Head of caudate nucleus (tissue), 42 donors: ENCODE measurements at regions of chr5 and their contacts with region 1.

Region 1: DNA sequence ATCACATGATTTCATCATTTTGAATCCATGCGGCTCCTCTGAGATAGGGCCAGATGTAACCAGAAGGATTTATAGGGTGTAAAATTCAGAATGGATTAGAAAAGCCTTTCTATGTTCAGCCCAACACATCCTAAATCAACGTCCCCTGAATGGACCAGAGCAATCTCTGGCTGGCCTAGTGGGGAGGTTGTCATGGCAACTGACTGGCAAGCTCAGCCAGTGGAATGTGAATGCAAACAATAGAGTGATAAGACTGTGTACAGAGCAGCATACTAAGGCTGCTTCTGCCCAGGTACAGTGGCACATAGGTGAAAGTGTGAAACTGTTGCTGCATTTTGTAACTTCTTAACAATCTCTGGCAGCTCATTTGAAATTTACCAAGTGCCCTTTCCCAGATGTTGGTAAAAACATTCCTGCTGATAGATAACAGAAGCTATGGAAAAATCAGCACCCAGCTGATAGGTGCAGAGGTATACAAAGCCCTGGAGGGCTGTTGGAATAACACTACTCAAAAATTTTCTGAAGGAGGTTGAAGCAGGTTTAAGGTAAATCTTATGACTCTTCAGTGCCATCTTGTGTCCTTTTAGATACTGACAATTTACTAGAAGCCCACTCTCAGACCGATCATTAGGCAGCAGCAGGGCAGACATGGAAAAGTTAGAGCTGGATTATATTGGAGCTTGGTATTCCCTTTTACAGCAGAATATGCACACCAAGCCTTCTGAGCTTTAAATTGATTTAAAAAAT is 267.2 kb downstream of the RAB3C start:
- DNase-seq: peak in 7 of 42 donors; percentile 4 to 18 (median 8)

Region 2: DNA sequence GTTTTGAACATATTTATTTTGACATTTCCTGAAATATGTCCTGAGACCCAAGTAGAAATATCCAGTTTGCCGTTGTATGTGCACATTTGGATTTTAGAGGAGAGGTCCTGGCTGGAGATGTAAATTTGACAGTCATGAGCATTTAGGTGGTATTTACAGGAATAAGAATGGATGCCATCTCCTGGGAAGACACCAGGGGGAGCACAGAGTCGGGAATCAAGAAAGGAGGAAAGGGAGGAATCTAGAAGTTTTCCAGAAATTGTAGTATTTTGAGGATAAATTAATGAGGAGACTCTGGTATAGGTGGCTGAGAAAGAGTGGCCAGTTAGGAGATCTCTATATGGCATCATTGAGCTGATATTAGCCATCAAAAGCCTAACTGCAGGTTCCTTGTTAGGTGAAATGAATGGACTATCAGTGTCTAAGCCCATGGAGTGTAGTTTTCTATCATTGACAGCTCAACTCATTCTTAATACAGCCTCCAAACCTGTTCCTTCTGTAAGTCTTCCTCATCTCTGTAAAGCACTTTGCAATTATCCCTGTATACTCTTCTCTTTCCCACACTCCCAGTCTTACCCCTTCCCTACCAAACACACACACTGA is 351.7 kb before region 1 on chr5:
- intact Hi-C with region 1: loop called (anchors 5 kb)
- DNase-seq: peak in 38 of 42 donors; percentile 8 to 85 (median 56)

Region 3: DNA sequence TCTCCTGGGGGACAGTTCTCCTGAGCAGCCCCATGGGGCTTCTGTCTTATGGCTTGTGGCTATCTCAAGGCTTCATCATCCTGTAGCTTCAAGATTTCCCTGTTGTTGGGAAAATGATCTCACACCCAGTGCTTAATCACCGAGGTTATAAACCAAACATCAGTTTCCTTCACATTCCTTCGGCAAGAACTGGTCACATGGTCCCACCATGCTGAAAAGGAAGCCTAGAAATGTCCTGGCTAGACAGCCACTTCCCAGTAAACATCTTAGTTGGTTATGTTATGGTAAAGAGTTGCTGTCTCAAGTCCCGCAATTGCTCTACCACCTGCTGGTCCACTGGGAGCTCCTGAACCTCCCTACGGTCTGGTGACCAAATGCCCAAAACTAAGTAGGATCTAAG is 201.2 kb before region 1 on chr5:
- intact Hi-C with region 1: no loop called
- DNase-seq: no peak

Region 4: DNA sequence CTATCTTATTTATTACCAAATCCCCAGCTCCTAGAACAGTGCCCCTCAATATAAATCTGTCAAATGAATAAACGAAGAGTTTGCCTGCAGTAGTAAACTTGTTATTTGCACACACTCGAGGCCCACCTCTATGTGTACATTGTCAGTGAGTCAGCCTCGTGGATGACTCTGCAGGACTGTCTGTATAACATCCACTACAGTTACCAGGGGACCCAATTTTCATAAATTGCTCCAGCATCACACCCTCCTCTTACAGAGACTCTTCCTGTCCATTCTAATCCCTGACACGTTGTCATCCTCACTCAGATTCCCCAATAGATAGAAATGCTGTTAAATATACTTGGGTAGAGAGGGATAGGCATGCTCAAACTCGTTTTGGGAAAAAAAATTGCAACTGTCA is 211.3 kb after region 1 on chr5:
- intact Hi-C with region 1: no loop called
- DNase-seq: no peak